HEK293T (cell line): ENCODE measurements at regions of chr4 and their contacts with region 1.

Region 1: GRCh38 chr4:139488442-139488841 is 34.5 kb downstream of the RAB33B start:
- DNase-seq: no peak

Region 2: GRCh38 chr4:139501927-139502899 is 13.8 kb after region 1 on chr4:
- CTCF ChIA-PET with region 1: interaction called, 12 read pairs
- POLR2A ChIA-PET with region 1: no interaction called
- DNase-seq: no peak